ENCODE measurements at regions of chr5 and their contacts with region 1.

Region 1: DNA sequence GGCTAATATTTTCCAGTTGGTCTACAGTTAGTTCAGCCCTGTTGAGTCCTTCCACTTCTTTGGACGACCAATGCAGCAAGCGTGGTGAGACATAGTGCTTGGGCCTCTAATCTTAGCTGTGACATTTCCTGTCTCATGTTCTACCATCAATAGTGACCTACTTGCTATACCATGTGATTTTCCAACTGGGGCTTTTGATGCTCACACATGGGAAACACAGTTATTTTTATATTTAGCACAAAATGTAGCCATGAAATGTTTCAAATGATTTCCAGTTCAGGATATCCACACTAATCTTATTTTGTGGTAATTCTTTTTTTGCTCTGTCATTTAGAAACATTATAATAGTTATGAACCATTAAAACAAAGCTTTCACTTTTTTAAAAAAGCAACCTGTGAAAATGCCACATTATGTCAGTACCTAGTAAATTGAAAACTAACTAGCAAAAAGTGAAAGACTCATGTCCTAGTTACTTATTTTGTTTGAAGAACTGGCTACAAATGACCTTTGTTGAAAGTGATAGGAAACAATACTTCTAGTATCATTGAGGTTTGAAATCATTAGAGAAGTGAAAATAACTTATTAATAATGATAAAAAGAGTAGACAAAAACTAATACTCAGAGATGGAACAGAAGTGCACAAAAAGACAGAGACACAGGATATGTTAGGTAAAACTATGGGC is 18.3 kb downstream of the MARCHF3 start:
- DNase-seq: no peak
- ATAC-seq: peak; percentile 47
- H3K4me3 ChIP-seq: peak overlapping the region in 1 of 5 experiments; percentile 25
- H3K4me3 Mint-ChIP-seq: peak overlapping the region; percentile 12
- H3K27ac ChIP-seq: peak overlapping the region in 1 of 2 donors; percentile 65
- H3K27ac Mint-ChIP-seq: peak overlapping the region; percentile 75
- H3K4me1 ChIP-seq: peaks cover 31 to 53% of the 10 kb centered on the region in 2 donors
- H3K4me1 Mint-ChIP-seq: peaks cover 68% of the 10 kb centered on the region
- H3K27me3 ChIP-seq: no peaks in the 10 kb centered on the region
- H3K27me3 Mint-ChIP-seq: no peaks in the 10 kb centered on the region
- CTCF ChIP-seq: no peak

Region 2: DNA sequence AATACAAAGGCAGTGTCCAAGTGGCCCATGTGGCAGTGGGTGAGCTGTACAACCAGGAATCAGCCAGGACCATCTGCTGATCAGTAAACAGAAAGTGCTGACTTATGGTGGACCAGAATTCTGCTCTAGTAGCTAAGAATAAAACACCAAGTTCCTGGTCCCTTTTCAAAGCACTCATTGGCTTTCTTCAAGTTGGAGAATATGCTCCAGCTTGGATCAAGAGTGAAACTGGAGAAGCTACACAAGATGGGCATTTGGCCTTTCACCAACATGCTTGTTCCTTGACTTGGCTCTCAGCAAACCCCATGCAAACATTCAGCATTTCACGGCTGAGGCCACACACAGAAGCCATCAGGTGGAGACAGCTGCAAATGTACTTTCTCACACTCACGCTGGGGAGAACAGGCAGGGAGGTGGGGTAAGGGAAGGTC is 13.9 kb before region 1 on chr5:
- CTCF ChIA-PET with region 1: no interaction called
- POLR2A ChIA-PET with region 1: no interaction called
- intact Hi-C with region 1: loop called (anchors 2 kb)
- DNase-seq: peak; percentile 29
- ATAC-seq: peak; percentile 66
- H3K4me3 ChIP-seq: peak overlapping the region in 1 of 5 experiments; percentile 6
- H3K4me3 Mint-ChIP-seq: peak overlapping the region; percentile 3
- H3K27ac ChIP-seq: peak overlapping the region; percentile 17 to 63
- H3K27ac Mint-ChIP-seq: peak overlapping the region; percentile 75
- H3K4me1 ChIP-seq: peaks cover 37 to 46% of the 10 kb centered on the region in 2 donors
- H3K4me1 Mint-ChIP-seq: peaks cover 71% of the 10 kb centered on the region
- H3K27me3 ChIP-seq: no peaks in the 10 kb centered on the region
- H3K27me3 Mint-ChIP-seq: no peaks in the 10 kb centered on the region
- CTCF ChIP-seq: no peak